Activated CD4-positive, alpha-beta memory T cell treated with anti-CD3 and anti-CD28 coated beads for 36 hours (primary cell): ENCODE measurements at regions of chr7 and their contacts with region 1.

Region 1: GRCh38 chr7:134458806-134459698 is at the start of gene AKR1B1:
- DNase-seq: peak; percentile 93
- H3K4me3 Mint-ChIP-seq: peak within 1 kb of the TSS; percentile 82
- H3K27ac Mint-ChIP-seq: peak within 1 kb of the TSS; percentile 67
- H3K4me1 Mint-ChIP-seq: peaks cover 41% of the 10 kb centered on the region
- H3K27me3 Mint-ChIP-seq: no peaks in the 10 kb centered on the region
- total RNA-seq, gene AKR1B1: 97.8 to 102 TPM

Region 2: DNA sequence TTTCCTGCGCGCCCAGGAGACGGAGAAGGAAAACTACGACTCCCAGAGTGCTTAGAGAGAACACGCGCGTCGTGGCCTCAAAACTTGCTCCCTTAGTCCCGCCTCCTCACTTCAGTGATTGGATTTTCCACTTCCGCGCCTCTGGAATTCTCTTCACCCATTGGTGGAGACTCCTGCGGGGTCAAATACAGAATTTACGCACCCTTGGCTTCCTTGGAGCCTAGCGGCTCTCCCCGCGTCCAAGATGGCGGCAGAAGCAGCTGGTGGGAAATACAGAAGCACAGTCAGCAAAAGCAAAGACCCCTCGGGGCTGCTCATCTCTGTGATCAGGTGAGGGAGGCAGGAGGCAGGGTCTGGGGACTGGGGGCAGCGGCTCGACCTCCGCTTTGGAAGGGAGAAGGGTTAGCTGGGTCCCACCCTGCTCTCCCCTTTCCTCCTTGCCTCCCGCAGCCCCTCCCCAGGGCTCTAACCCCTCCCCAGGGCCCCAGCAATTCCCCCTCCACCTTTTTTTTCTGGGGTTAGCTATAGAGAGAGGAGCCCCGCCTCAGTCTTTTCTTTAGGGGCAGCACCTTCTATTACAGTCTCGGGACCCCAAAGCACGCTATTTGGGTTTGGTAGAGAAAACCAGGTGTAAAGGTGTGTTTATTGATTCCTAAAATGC is 1206.1 kb before region 1 on chr7 and contains the start of gene EXOC4:
- CTCF ChIA-PET with region 1: no interaction called
- POLR2A ChIA-PET with region 1: no interaction called
- intact Hi-C with region 1: loop called (anchors 10 kb)
- DNase-seq: peak; percentile 95
- H3K4me3 Mint-ChIP-seq: peak within 1 kb of the TSS; percentile 89
- H3K27ac Mint-ChIP-seq: peak within 1 kb of the TSS; percentile 85
- H3K4me1 Mint-ChIP-seq: peaks cover 30% of the 10 kb centered on the region
- H3K27me3 Mint-ChIP-seq: no peaks in the 10 kb centered on the region
- total RNA-seq, gene EXOC4: 55.8 to 60.8 TPM

Region 3: GRCh38 chr7:134432296-134433152 is 26.5 kb before region 1 on chr7:
- CTCF ChIA-PET with region 1: interaction called, 25 read pairs
- POLR2A ChIA-PET with region 1: no interaction called
- intact Hi-C with region 1: loop called (anchors 1 kb)
- DNase-seq: peak; percentile 81
- H3K4me3 Mint-ChIP-seq: peak overlapping the region; percentile 70
- H3K27ac Mint-ChIP-seq: peak overlapping the region; percentile 80
- H3K4me1 Mint-ChIP-seq: peaks cover 13% of the 10 kb centered on the region
- H3K27me3 Mint-ChIP-seq: no peaks in the 10 kb centered on the region

Region 4: GRCh38 chr7:134504660-134505164 is 45.7 kb after region 1 on chr7:
- CTCF ChIA-PET with region 1: no interaction called
- POLR2A ChIA-PET with region 1: no interaction called
- intact Hi-C with region 1: no loop called
- DNase-seq: no peak
- H3K4me3 Mint-ChIP-seq: no peak overlapping the region
- H3K27ac Mint-ChIP-seq: no peak overlapping the region
- H3K4me1 Mint-ChIP-seq: no peaks in the 10 kb centered on the region
- H3K27me3 Mint-ChIP-seq: peaks cover 1% of the 10 kb centered on the region

Region 5: DNA sequence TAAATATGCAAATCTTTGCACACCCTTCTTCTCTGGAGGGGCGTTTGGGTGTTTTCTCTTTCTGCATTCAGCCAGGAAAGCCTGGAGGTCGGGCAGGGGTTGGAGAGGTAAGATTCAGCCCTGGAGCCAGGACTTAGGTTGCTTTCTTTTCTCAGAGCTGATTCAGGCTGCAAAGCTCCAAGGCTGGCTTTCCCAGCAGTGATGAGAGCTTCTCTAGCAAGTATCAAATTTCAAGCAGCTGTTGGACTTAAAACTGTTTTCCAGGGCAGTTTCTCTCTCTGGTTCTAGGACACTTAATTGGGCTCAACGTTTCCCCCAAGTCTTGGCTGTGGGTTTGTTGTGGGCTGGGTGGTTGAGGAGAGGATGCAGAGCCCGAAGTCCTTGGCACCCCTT is 68.9 kb after region 1 on chr7:
- CTCF ChIA-PET with region 1: no interaction called
- POLR2A ChIA-PET with region 1: no interaction called
- intact Hi-C with region 1: no loop called
- DNase-seq: no peak
- H3K4me3 Mint-ChIP-seq: no peak overlapping the region
- H3K27ac Mint-ChIP-seq: no peak overlapping the region
- H3K4me1 Mint-ChIP-seq: no peaks in the 10 kb centered on the region
- H3K27me3 Mint-ChIP-seq: peaks cover 4% of the 10 kb centered on the region

Region 6: DNA sequence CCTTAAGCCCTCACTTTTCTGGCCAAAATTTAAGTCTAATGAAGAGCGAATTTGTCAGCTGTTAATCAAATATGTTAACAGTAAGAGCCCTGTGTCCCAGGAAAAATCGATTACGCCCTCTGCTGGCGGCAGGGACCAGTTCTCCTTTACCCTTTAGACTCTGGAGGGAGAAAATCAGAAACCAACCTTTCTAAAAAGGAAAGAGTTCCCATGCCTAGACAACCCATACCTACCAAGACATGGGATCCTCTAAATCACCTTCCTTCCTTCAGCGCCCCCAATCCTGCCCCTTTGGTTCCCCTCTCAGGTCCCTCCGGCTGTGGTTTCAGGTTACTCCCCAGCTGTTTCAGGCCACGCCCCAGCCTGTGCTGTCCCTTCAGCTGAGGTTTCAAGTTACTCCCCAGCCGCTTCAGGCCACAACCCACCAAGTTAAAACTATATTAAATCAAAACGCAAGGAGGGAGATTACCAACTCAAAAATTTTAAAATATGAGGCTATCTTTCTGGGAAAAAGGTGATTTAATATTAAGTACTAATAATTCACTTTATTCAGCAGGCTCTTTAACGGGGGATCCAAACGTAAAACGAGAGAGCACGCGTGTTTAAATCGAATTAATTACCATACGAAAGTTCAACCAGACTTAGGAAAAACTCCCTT is 88.5 kb after region 1 on chr7:
- CTCF ChIA-PET with region 1: interaction called, 12 read pairs
- POLR2A ChIA-PET with region 1: no interaction called
- intact Hi-C with region 1: loop called (anchors 1 kb)
- DNase-seq: peak; percentile 73
- H3K4me3 Mint-ChIP-seq: no peak overlapping the region
- H3K27ac Mint-ChIP-seq: no peak overlapping the region
- H3K4me1 Mint-ChIP-seq: peaks cover 4% of the 10 kb centered on the region
- H3K27me3 Mint-ChIP-seq: peaks cover 5% of the 10 kb centered on the region

Region 7: GRCh38 chr7:134737566-134738345 is 278.7 kb after region 1 on chr7:
- CTCF ChIA-PET with region 1: no interaction called
- POLR2A ChIA-PET with region 1: no interaction called
- intact Hi-C with region 1: loop called (anchors 10 kb)
- DNase-seq: peak; percentile 65
- H3K4me3 Mint-ChIP-seq: no peak overlapping the region
- H3K27ac Mint-ChIP-seq: peak overlapping the region; percentile 88
- H3K4me1 Mint-ChIP-seq: peaks cover 41% of the 10 kb centered on the region
- H3K27me3 Mint-ChIP-seq: no peaks in the 10 kb centered on the region

Region 8: DNA sequence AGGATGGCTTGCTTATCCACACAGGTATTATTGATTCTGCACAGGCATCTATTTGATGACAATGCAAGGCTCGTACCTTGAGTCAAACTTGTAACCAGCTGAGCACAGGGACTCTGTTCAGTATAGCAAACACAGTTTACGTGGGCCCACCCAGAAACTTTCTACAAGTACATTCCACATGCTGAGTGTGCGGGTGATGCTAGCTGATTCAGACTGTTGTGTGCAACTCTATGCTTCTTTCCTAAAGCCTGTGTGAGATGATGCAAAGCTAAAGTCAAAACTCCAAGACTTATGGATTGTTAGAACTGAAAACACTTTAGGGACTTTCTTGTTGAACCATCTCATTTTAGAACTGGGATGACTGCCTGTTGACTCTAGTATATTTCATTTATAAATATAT is 298.9 kb after region 1 on chr7:
- CTCF ChIA-PET with region 1: no interaction called
- POLR2A ChIA-PET with region 1: no interaction called
- intact Hi-C with region 1: no loop called
- DNase-seq: no peak
- H3K4me3 Mint-ChIP-seq: no peak overlapping the region
- H3K27ac Mint-ChIP-seq: no peak overlapping the region
- H3K4me1 Mint-ChIP-seq: no peaks in the 10 kb centered on the region
- H3K27me3 Mint-ChIP-seq: no peaks in the 10 kb centered on the region

Region 9: DNA sequence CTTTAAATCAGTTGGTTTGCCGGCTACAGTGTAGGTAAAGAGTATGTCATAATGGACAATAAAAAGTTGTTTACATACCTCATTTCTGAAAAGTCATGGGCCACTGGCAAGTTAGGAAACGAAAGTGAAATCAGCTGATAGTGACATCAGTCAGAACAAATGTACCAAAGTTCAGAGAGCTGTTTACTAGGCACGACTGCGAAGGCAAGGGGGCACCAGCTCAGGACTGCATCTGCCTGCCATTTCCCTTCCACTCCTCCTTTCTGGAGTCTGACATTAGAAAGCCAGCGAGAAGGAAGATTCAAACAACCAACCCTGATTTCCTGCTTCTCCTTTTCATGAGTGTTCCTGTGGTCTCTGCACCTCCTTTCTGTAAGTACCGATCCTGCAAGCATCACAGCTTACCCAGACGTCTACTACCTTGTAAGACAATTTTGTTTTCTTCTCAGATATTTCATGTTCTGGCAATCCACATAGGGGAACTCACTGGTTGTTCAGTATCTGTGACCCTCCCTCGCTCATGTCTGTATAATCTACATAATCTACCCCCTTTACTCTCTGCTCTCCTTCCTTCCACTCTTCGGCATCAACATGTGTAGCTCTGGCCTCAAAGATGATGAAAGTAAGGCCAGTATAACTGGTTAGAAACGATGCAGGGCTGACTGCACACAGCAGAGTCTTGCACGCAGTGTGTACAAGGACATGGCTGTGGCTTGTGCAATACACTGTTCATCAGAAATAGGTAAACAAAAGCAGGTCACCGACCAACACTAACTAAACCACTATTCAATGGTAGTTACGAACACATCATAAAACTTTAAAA is 689.1 kb after region 1 on chr7 and contains the start of gene TMEM140:
- CTCF ChIA-PET with region 1: no interaction called
- POLR2A ChIA-PET with region 1: no interaction called
- intact Hi-C with region 1: loop called (anchors 5 kb)
- DNase-seq: peak; percentile 73
- H3K4me3 Mint-ChIP-seq: peak within 1 kb of the TSS; percentile 83
- H3K27ac Mint-ChIP-seq: peak within 1 kb of the TSS; percentile 95
- H3K4me1 Mint-ChIP-seq: peaks cover 60% of the 10 kb centered on the region
- H3K27me3 Mint-ChIP-seq: no peaks in the 10 kb centered on the region
- total RNA-seq, gene TMEM140: 8.6 to 10.0 TPM